Panc1 (cell line): ENCODE measurements at regions of chr11 and their contacts with region 1.

Region 1: GRCh38 chr11:61947486-61948210 is 2.5 kb upstream of the BEST1 start:
- DNase-seq: no peak
- ATAC-seq: peak; percentile 86
- H3K4me3 ChIP-seq: no peak overlapping the region
- H3K27ac ChIP-seq: no peak overlapping the region
- H3K4me1 ChIP-seq: 0 out of 2 replicates have a peak, but pooled peaks cover 4% of the 10 kb centered on the region
- H3K27me3 ChIP-seq: no peaks in the 10 kb centered on the region; the same call in 1 of the 2 replicates
- CTCF ChIP-seq: peak; percentile 96

Region 2: GRCh38 chr11:61628446-61628970 is 319.1 kb before region 1 on chr11:
- CTCF ChIA-PET with region 1: no interaction called
- POLR2A ChIA-PET with region 1: no interaction called
- in situ Hi-C with region 1: no loop called
- intact Hi-C with region 1: no loop called
- DNase-seq: no peak
- ATAC-seq: peak; percentile 41
- H3K4me3 ChIP-seq: no peak overlapping the region
- H3K27ac ChIP-seq: no peak overlapping the region
- H3K4me1 ChIP-seq: no peaks in the 10 kb centered on the region
- H3K27me3 ChIP-seq: no peaks in the 10 kb centered on the region
- CTCF ChIP-seq: peak; percentile 51

Region 3: GRCh38 chr11:61747192-61747966 is 200.3 kb before region 1 on chr11:
- CTCF ChIA-PET with region 1: no interaction called
- POLR2A ChIA-PET with region 1: no interaction called
- in situ Hi-C with region 1: no loop called
- intact Hi-C with region 1: no loop called
- DNase-seq: no peak
- ATAC-seq: peak; percentile 86
- H3K4me3 ChIP-seq: no peak overlapping the region
- H3K27ac ChIP-seq: no peak overlapping the region
- H3K4me1 ChIP-seq: no peaks in the 10 kb centered on the region; the same call in 1 of the 2 replicates
- H3K27me3 ChIP-seq: no peaks in the 10 kb centered on the region
- CTCF ChIP-seq: peak; percentile 96

Region 4: DNA sequence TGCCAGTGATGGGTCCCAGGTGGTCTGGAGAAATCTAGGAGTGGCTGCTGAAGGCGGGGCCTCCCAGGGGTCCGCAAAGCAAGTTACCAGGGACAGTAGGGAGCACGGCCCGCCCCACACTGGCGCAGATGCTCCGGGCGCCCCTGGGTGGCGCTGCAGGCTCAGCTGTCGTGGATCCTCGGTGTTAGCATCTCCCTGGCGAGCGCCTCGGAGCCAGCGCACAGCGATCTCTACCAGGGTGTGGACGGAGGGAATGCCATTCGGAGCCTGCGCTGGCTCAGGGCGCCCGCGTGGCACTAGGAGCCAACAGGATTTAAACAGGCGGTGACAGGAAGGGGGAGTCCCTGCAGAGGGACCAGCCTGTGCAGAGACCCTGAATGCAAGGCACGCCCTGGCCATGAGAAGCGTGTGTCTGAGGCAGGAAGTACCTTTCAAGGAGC is 76.5 kb before region 1 on chr11:
- CTCF ChIA-PET with region 1: interaction called, 13 read pairs
- POLR2A ChIA-PET with region 1: no interaction called
- in situ Hi-C with region 1: no loop called
- intact Hi-C with region 1: loop called (anchors 1 kb)
- DNase-seq: peak; percentile 25
- ATAC-seq: peak; percentile 95
- H3K4me3 ChIP-seq: peak overlapping the region in 1 of 2 experiments; percentile 40; a peak in 2 of 4 replicates
- H3K27ac ChIP-seq: peak overlapping the region; percentile 48; the same call in 1 of the 2 replicates
- H3K4me1 ChIP-seq: peaks cover 13% of the 10 kb centered on the region
- H3K27me3 ChIP-seq: no peaks in the 10 kb centered on the region
- CTCF ChIP-seq: peak; percentile 97

Region 5: GRCh38 chr11:61899146-61899841 is 48.4 kb before region 1 on chr11:
- CTCF ChIA-PET with region 1: interaction called, 49 read pairs
- POLR2A ChIA-PET with region 1: no interaction called
- in situ Hi-C with region 1: no loop called
- intact Hi-C with region 1: loop called (anchors 2 kb)
- DNase-seq: peak; percentile 41
- ATAC-seq: peak; percentile 86
- H3K4me3 ChIP-seq: no peak overlapping the region
- H3K27ac ChIP-seq: no peak overlapping the region
- H3K4me1 ChIP-seq: no peaks in the 10 kb centered on the region
- H3K27me3 ChIP-seq: no peaks in the 10 kb centered on the region
- CTCF ChIP-seq: peak; percentile 99

Region 6: GRCh38 chr11:61912530-61912898 is 35.1 kb before region 1 on chr11:
- CTCF ChIA-PET with region 1: interaction called, 5 read pairs
- POLR2A ChIA-PET with region 1: no interaction called
- in situ Hi-C with region 1: no loop called
- intact Hi-C with region 1: loop called (anchors 5 kb)
- DNase-seq: no peak
- ATAC-seq: no peak
- H3K4me3 ChIP-seq: no peak overlapping the region
- H3K27ac ChIP-seq: no peak overlapping the region
- H3K4me1 ChIP-seq: no peaks in the 10 kb centered on the region
- H3K27me3 ChIP-seq: no peaks in the 10 kb centered on the region
- CTCF ChIP-seq: no peak

Region 7: DNA sequence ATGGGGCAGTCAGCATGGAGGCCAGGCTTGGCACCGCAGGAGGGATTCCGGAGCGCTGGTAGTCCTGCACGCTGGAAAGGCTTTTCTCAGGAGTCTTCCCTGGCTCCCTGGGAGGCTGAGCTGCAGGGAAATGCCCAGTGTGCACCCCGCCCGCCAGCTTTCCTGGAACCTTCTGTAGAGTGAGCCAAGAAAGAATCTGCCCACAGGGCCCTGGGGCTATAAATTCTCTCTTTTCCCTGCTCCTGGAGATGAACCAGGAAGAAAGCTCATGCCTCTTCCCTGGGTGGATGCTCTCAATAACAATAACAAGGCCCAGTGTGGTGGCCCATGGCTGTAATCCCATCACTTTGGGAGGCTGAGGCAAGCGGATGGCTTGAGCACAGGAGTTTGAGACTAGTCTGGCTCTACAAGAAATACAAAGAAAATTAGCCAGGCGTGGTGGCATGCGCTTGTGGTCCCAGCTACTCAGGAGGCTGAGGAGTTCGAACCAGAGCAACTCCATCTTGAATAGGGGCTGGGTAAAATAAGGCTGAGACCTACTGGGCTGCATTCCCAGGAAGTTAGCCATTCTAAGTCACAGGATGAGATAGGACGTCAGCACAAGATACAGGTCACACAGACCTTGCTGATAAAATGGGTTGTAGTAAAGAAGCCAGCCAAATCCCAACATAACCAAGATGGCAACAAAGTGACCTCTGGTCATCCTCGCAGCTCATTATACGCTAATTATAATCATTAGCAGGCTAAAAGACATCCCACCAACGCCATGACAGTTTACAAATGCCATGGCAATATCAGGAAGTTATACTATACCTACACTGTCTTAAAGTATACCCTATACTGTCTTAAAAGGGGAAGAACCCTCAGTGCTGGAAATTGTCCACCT is 66.2 kb after region 1 on chr11:
- CTCF ChIA-PET with region 1: no interaction called
- POLR2A ChIA-PET with region 1: no interaction called
- in situ Hi-C with region 1: no loop called
- intact Hi-C with region 1: no loop called
- DNase-seq: no peak
- ATAC-seq: peak; percentile 77
- H3K4me3 ChIP-seq: peak overlapping the region in 1 of 2 experiments; percentile 27; a peak in 1 of 4 replicates
- H3K27ac ChIP-seq: peak overlapping the region; percentile 71
- H3K4me1 ChIP-seq: peaks cover 10% of the 10 kb centered on the region; the same call in 1 of the 2 replicates
- H3K27me3 ChIP-seq: no peaks in the 10 kb centered on the region
- CTCF ChIP-seq: no peak

Region 8: GRCh38 chr11:62061351-62062222 is 113.9 kb after region 1 on chr11:
- CTCF ChIA-PET with region 1: interaction called, 3 read pairs
- POLR2A ChIA-PET with region 1: interaction called, 14 read pairs
- in situ Hi-C with region 1: no loop called
- intact Hi-C with region 1: no loop called
- DNase-seq: no peak
- ATAC-seq: no peak
- H3K4me3 ChIP-seq: no peak overlapping the region
- H3K27ac ChIP-seq: no peak overlapping the region
- H3K4me1 ChIP-seq: no peaks in the 10 kb centered on the region
- H3K27me3 ChIP-seq: no peaks in the 10 kb centered on the region
- CTCF ChIP-seq: no peak